ENCODE measurements at regions of chr16 and their contacts with region 1.

Region 1: GRCh38 chr16:283033-283805 is at the start of gene PDIA2:
- DNase-seq: no peak
- H3K4me3 ChIP-seq: no peak within 1 kb of the TSS
- H3K27ac ChIP-seq: no peak within 1 kb of the TSS
- H3K4me1 ChIP-seq: no peaks in the 10 kb centered on the region
- H3K27me3 ChIP-seq: peaks cover 6% of the 10 kb centered on the region; the same call in 1 of the 2 replicates
- CTCF ChIP-seq: no peak
- total RNA-seq, gene PDIA2: not detected in 2 replicates

Region 2: GRCh38 chr16:245105-245504 is 38.1 kb before region 1 on chr16:
- CTCF ChIA-PET with region 1: interaction called, 24 read pairs
- POLR2A ChIA-PET with region 1: no interaction called
- intact Hi-C with region 1: no loop called
- DNase-seq: no peak
- H3K4me3 ChIP-seq: no peak overlapping the region
- H3K27ac ChIP-seq: no peak overlapping the region
- H3K4me1 ChIP-seq: peaks cover 1% of the 10 kb centered on the region; the same call in 1 of the 2 replicates
- H3K27me3 ChIP-seq: no peaks in the 10 kb centered on the region
- CTCF ChIP-seq: no peak

Region 3: GRCh38 chr16:303760-304505 is 20.7 kb after region 1 on chr16:
- CTCF ChIA-PET with region 1: no interaction called
- POLR2A ChIA-PET with region 1: no interaction called
- intact Hi-C with region 1: no loop called
- DNase-seq: no peak
- H3K4me3 ChIP-seq: no peak overlapping the region
- H3K27ac ChIP-seq: no peak overlapping the region
- H3K4me1 ChIP-seq: no peaks in the 10 kb centered on the region
- H3K27me3 ChIP-seq: no peaks in the 10 kb centered on the region
- CTCF ChIP-seq: no peak